Sciatic nerve (tissue), 2 donors: ENCODE measurements at regions of chr4 and their contacts with region 1.

Region 1: GRCh38 chr4:139922406-139923024 is 231.5 kb downstream of the MAML3 start:
- DNase-seq: no peak
- ATAC-seq: no peak

Region 2: GRCh38 chr4:139950568-139950967 is 28.1 kb after region 1 on chr4:
- intact Hi-C with region 1: loop called (anchors 2 kb)
- DNase-seq: no peak
- ATAC-seq: peak; percentile 24